Activated CD4-positive, alpha-beta T cell treated with anti-CD3 and anti-CD28 coated beads for 36 hours (primary cell): ENCODE measurements at regions of chr16 and their contacts with region 1.

Region 1: GRCh38 chr16:86110726-86111125 is 211.8 kb downstream of the IRF8 start:
- DNase-seq: no peak
- ATAC-seq: no peak
- H3K4me3 Mint-ChIP-seq: no peak overlapping the region
- H3K27ac Mint-ChIP-seq: no peak overlapping the region
- H3K4me1 Mint-ChIP-seq: no peaks in the 10 kb centered on the region
- H3K27me3 Mint-ChIP-seq: peaks cover 8% of the 10 kb centered on the region

Region 2: GRCh38 chr16:86072328-86073102 is 38.2 kb before region 1 on chr16:
- CTCF ChIA-PET with region 1: interaction called, 10 read pairs
- POLR2A ChIA-PET with region 1: no interaction called
- intact Hi-C with region 1: no loop called
- DNase-seq: peak; percentile 69
- ATAC-seq: no peak
- H3K4me3 Mint-ChIP-seq: no peak overlapping the region
- H3K27ac Mint-ChIP-seq: no peak overlapping the region
- H3K4me1 Mint-ChIP-seq: no peaks in the 10 kb centered on the region
- H3K27me3 Mint-ChIP-seq: peaks cover 6% of the 10 kb centered on the region